Activated CD8-positive, alpha-beta memory T cell treated with anti-CD3 and anti-CD28 coated beads, Interleukin-2, amount 10 ng/mL, durations not matched to agents 7 days and 5 days (primary cell): ENCODE measurements at regions of chr7 and their contacts with region 1.

Region 1: GRCh38 chr7:100469227-100470044 is 5.4 kb upstream of the SPACDR start:
- DNase-seq: peak; percentile 85
- ATAC-seq: peak; percentile 86
- H3K4me3 Mint-ChIP-seq: no peak overlapping the region
- H3K27ac Mint-ChIP-seq: peak overlapping the region; percentile 49
- H3K4me1 Mint-ChIP-seq: peaks cover 23% of the 10 kb centered on the region
- H3K27me3 Mint-ChIP-seq: no peaks in the 10 kb centered on the region

Region 2: GRCh38 chr7:100444311-100445278 is 24.8 kb before region 1 on chr7:
- CTCF ChIA-PET with region 1: interaction called, 14 read pairs
- DNase-seq: no peak
- ATAC-seq: peak; percentile 63
- H3K4me3 Mint-ChIP-seq: no peak overlapping the region
- H3K27ac Mint-ChIP-seq: peak overlapping the region; percentile 74
- H3K4me1 Mint-ChIP-seq: peaks cover 20% of the 10 kb centered on the region
- H3K27me3 Mint-ChIP-seq: no peaks in the 10 kb centered on the region

Region 3: DNA sequence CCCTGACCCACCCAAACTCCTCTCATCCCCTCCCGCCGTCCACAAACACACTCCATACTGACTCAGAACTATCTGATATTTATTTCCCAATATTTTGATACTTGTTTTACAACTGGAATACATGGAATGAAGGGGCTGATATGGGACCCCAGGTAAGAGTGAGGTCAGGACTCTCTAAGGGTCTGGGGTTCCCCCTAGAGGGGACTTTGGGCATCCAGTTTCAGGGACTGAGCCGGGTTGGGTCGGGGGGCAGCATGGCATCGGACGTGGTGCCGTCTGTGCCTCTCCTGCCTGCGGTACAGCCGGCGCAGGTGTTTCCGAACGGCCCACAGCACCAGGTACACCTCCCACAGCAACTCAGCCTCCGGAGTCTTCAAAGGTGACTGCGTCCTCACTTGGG is 12.9 kb before region 1 on chr7:
- CTCF ChIA-PET with region 1: interaction called, 26 read pairs
- DNase-seq: no peak
- ATAC-seq: no peak
- H3K4me3 Mint-ChIP-seq: no peak overlapping the region
- H3K27ac Mint-ChIP-seq: no peak overlapping the region
- H3K4me1 Mint-ChIP-seq: peaks cover 6% of the 10 kb centered on the region
- H3K27me3 Mint-ChIP-seq: no peaks in the 10 kb centered on the region

Region 4: DNA sequence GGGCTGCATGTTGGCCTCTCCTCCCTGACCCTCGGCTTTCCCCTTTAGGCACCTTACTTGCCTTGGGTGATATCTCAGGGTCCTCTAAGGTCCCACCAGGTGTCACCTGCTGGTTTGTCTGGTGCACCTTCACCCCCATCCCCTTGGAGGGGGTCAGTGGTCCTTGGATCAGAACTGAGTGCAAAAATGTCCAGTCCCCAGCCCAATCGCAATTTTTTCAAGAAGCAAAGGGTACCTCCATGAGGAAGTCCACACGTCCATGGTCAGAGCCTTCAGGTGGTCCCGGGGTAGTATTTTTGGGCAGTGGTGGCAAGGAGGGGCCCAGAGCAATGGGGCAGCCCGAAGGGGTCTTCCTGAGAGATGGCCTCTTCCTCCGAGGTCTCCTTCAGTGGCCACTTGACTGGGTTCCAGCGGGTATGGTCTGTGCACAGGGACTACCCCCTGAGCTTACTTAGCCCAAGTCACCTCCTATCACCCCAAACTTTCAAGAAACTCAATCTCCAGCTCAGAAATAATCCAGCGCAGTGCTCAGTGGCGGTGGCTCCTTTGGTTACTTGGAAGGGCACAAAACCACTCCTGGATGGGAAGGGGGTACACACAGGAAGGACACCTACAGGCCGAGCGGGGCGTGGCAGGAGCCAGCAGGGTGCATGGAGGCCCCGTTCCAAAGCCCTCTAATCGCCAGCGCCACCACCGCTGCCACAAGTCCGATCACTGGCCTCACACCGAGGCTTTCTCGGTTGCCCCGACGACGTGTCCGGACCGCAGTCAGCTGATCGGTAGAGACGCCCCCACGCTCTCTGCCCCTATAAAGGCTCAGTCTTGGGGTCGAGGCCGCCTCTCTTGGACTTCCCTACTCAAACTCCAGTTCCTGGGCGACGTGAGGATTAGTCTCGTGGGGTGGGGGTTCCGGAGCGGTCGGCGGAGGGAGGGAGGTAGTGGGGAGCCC is 99.7 kb after region 1 on chr7:
- CTCF ChIA-PET with region 1: interaction called, 11 read pairs
- DNase-seq: peak; percentile 73
- ATAC-seq: peak; percentile 48
- H3K4me3 Mint-ChIP-seq: peak overlapping the region; percentile 16
- H3K27ac Mint-ChIP-seq: peak overlapping the region; percentile 22
- H3K4me1 Mint-ChIP-seq: peaks cover 46% of the 10 kb centered on the region
- H3K27me3 Mint-ChIP-seq: no peaks in the 10 kb centered on the region

Region 5: DNA sequence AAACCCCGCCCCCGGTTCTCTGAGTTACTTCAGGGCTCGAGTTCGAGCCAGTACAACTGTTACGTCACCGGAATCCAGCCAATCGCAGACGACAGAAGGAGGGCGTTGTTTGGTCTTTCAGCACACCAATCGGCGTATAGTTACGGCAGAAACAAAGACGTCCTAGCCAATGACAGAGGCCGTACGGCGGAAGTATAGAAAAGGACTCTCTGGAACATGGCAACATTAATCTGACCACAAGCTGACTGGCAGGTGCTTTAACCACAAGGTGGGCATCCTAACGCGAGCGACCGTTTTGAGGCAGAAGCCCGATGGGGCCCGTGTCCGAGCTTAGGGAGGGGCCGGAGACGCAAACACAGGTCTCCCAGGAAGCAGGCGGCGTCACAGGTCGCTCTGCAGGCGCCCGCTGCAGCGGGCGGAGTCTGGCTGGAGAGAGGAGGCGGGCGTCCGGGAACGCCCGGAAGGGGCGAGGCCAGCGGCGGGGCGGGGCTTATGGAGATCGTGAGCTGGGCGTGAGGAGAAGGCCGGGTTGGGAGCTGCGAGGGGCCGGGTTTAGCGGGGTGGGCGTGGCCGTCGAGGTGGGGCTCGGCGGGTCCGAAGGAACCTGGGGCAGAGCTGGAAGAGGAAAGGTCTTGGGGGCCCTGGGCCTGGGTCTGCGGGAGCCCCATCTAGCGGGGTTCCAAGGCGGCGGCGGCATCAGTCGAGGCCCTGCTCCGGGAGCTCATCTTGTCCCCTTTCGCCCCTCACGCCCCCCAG is 142.7 kb after region 1 on chr7 and contains the start of gene MOSPD3:
- CTCF ChIA-PET with region 1: no interaction called
- DNase-seq: peak; percentile 99
- ATAC-seq: peak; percentile 95
- H3K4me3 Mint-ChIP-seq: peak within 1 kb of the TSS; percentile 87
- H3K27ac Mint-ChIP-seq: peak within 1 kb of the TSS; percentile 100
- H3K4me1 Mint-ChIP-seq: peaks cover 22% of the 10 kb centered on the region
- H3K27me3 Mint-ChIP-seq: no peaks in the 10 kb centered on the region
- total RNA-seq, gene MOSPD3: 22.2 to 28.8 TPM